ENCODE measurements at regions of chr22 and their contacts with region 1.

Region 1: DNA sequence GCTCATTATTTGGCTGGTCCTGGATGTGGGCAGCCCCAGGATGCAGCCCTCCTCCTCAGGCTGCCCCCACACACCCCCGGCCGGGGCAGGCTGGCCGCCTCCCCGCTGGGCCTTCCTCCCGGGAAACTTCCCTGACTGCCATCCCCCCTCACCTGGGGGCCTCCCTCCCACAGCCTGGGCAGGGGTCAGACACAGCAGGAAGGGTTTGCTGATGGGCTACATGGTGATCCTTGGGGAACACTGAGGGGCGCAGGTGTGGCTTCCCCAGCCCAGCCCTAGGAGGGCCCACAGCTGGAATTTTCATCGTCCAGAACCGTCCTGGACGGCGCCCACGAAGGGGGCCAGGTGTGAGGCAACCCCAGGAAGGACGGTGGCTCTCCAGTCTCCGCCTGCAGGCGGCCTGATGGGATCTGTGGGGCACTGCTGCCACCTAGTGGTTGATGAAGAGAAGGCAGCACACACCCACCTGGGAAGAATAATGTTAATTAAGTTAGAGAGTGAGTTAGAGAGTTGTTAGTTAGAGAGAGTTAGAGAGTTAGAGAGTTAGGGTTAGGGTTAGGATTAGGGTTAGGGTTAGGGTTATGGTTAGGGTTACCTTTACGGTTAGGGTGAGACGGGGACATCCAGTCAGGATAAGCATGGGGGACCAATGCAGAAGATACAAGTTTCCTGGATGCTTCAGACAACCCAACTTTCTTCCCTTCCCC is 75.9 kb upstream of the PRR5 start:
- DNase-seq: peak; percentile 84
- H3K4me3 Mint-ChIP-seq: no peak overlapping the region
- H3K27ac Mint-ChIP-seq: no peak overlapping the region
- H3K4me1 Mint-ChIP-seq: peaks cover 4% of the 10 kb centered on the region
- H3K27me3 Mint-ChIP-seq: no peaks in the 10 kb centered on the region

Region 2: DNA sequence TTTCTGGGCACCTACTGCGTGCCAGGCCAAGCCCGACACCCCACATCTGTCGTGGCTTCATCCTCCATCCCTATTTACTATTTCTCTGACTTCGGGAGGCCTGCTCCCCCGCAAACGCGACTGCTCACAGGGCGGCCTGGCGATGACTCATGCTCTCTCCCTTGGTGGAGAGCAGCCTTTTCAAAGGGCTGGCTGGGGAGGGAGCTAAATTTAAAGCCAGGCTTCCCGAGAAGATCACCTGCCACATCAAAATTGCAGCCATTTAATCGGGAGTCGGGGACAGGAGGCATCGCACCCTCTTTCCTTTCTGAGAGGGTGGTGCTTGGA is 288.5 kb before region 1 on chr22:
- CTCF ChIA-PET with region 1: no interaction called
- intact Hi-C with region 1: loop called (anchors 10 kb)
- DNase-seq: no peak
- H3K4me3 Mint-ChIP-seq: no peak overlapping the region
- H3K27ac Mint-ChIP-seq: no peak overlapping the region
- H3K4me1 Mint-ChIP-seq: no peaks in the 10 kb centered on the region
- H3K27me3 Mint-ChIP-seq: peaks cover 5% of the 10 kb centered on the region

Region 3: DNA sequence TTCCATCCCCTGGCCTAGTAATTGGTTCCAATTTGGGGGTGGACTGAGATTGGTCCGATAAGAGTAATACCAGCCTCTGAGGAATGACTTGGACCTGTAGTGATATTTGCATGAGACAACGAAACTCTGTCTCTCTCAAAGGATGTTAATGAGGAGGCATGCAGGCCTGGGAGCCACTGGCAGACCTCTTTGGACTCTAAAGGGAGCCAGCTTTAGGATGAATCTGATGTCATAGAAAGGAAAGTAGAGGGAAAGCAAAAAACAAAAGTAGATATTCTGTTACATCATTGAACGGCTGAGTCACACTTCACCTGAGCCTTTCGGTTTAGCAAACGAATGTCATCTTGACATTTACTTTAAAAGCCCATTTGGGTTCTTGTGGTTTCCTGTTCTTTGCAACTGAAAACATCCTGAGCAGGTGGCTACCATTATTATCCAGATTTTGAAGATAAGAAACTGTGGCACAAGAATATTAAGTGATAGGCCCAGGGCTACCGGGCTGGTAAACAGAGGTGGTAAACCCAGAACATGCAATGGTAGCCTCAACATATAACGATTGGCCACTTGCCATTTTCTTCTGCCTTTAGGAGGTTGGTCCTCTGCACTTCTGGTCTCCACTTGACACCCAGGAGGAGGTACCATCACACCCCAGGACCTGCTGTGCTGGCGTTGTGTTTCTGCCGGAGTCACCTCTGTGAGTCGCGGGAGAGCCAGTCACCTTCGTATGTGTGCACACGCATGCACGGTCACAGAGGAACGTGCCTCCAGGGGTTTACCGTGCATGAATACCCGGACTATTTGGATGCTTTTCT is 170.8 kb before region 1 on chr22:
- CTCF ChIA-PET with region 1: no interaction called
- intact Hi-C with region 1: no loop called
- DNase-seq: peak; percentile 57
- H3K4me3 Mint-ChIP-seq: peak overlapping the region; percentile 27
- H3K27ac Mint-ChIP-seq: peak overlapping the region; percentile 80
- H3K4me1 Mint-ChIP-seq: peaks cover 27% of the 10 kb centered on the region
- H3K27me3 Mint-ChIP-seq: no peaks in the 10 kb centered on the region

Region 4: DNA sequence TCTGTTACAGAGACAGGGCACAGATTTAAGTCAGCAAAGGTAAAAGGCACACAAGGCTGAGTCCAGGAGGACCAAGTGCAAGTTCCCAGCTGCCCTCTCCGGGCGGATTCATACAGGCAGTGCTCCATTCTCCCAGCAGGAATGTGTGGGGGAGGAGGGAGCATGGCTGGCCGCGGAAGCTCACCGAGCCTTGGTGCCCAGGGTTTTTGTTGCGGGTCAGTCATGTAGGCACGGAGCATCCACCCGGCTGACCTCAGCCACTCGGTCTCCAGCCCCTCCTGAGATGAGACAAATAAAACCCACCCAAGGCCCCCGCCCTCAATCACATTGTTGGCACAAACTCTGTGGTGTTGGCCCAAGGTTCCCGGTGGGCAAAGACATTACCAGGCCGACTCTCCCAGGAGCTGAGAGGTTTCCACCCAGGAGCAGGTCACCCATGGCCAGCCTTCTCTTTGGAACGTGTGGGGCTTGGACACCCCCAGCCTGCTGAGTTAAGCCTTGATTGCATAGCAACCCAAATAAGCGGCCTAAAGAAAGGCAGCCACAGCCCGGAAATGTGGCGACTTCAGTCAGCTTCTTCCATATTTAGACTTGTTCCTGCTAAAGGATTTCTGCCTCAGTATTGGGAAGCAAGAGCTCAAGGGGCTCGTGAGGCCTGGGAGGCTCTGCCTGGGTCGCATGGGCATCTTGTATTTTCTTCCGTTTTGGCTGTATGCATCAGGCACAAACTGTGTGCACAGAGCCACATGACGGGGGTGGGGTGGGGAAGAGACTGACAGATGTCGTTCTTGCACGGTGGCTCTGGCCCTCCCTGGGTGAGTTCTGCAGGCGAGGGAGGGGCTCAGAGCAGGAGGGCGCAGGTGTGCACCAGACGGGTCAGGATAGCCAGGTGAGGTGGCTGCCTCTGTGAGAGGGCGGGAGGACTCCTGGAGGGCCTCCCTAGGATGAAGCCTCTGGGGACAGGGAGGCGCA is 189.3 kb after region 1 on chr22:
- CTCF ChIA-PET with region 1: no interaction called
- intact Hi-C with region 1: no loop called
- DNase-seq: no peak
- H3K4me3 Mint-ChIP-seq: no peak overlapping the region
- H3K27ac Mint-ChIP-seq: no peak overlapping the region
- H3K4me1 Mint-ChIP-seq: no peaks in the 10 kb centered on the region
- H3K27me3 Mint-ChIP-seq: peaks cover 2% of the 10 kb centered on the region

Region 5: DNA sequence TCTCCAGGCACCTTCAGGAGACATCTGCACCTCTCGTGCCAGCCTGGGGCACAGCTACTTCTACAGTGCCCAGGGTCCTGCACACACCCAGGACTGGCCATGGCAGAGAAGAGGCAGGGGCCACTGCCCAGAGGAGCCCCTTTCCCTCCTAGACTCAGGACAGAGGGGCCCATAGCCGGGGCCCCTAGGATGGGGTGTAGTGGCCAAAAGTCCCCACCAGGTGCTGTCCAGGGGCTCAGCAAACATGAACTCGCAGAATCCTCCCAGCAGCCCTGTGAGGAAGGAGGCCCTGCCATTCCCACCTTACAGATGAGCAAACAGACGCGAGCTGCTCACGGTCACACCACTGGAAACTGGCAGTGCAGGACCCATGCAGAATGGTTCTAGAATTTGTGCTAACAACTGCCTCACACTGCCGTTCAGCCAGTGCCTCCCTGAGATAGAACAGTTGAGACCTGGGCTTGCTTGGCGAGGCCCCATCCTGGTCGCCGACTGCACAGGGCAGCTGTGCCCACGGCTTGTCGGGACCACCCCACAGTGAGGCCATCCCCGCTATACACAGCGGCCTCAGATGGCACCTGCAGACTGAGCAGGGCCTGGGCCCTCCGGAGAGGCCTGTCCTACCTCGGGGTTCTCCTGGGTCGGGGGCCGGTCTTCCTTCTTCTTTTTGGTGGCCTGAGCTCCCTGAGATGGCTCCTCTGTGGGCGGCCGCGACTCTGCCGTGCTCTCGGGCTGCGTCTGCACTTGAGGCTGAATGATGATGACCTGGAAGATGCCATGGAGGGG is 287.3 kb after region 1 on chr22:
- CTCF ChIA-PET with region 1: no interaction called
- intact Hi-C with region 1: no loop called
- DNase-seq: no peak
- H3K4me3 Mint-ChIP-seq: no peak overlapping the region
- H3K27ac Mint-ChIP-seq: no peak overlapping the region
- H3K4me1 Mint-ChIP-seq: no peaks in the 10 kb centered on the region
- H3K27me3 Mint-ChIP-seq: peaks cover 5% of the 10 kb centered on the region